HepG2 (cell line): ENCODE measurements at regions of chr20 and their contacts with region 1.

Region 1: DNA sequence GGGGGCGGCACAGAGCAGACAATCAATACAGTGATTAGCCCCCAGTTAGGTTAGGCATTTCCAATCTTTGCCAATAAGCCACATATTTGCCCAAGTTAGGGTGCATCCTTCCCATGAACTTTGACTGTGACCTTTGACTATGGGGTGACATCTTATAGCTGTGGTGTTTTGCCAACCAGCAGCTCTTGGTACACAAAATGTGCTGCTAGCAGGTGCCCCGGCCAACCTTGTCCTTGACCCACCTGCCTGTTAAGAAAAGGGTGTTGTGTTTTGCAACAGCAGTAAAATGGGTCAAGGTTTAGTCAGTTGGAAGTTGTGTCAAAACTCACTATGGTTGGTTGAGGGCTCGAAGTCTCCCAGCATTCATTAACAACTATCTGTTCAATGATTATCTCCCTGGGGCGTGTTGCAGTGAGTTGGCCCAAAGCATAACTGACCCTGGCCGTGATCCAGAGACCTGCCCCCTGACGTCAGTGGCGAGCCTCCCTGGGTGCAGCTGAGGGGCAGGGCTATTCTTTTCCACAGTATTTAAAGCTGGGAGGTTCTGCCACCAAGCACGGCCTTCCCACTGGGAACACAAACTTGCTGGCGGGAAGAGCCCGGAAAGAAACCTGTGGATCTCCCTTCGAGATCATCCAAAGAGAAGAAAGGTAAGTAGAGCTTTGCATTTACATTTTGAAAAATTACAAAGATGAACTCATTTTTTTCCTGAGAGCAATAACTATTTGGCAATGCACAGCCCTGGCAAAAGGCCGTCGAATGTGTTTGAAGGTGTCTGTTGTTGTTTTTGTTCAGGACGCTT is at the start of gene PCK1:
- DNase-seq: peak; percentile 89
- ATAC-seq: peak; percentile 89
- H3K4me3 ChIP-seq: peak within 1 kb of the TSS; percentile 47 to 68 (median 50)
- H3K27ac ChIP-seq: peak within 1 kb of the TSS; percentile 80
- H3K4me1 ChIP-seq: peaks cover 100% of the 10 kb centered on the region
- H3K27me3 ChIP-seq: peaks cover 7 to 10% of the 10 kb centered on the region in 2 experiments; a peak in 4 of 5 replicates
- CTCF ChIP-seq: no peak; the same call in 1 of the 2 replicates
- EP300 ChIP-seq: peak; percentile 95 to 98
- POLR2A ChIP-seq: peak; percentile 79 to 94; a peak in 3 of 4 replicates
- RAD21 ChIP-seq: no peak
- total RNA-seq, gene PCK1: 5.4 and 12.6 TPM in 2 replicates

Region 2: DNA sequence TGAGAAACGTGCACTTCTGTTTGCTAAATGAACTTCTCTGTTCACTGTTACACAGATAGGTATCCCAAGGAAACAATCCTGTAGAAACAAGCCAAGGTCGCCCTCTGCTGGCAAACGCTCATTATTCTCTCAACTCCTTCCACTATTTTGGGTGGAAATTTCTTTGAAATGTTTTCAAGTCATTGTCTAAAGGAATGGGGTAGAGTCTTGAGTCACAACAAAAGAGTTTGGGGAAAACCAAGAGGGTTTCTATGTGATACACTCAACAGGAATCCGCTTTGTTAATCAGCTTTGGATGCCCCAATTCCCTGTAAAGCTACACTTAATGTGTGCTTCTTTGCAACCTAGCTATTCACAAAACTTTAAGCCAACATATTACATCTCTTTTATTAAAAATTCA is 214.3 kb before region 1 on chr20:
- CTCF ChIA-PET with region 1: no interaction called
- POLR2A ChIA-PET with region 1: no interaction called
- in situ Hi-C with region 1: no loop called
- intact Hi-C with region 1: no loop called
- DNase-seq: peak; percentile 69
- ATAC-seq: peak; percentile 57
- H3K4me3 ChIP-seq: no peak overlapping the region
- H3K27ac ChIP-seq: no peak overlapping the region
- H3K4me1 ChIP-seq: no peaks in the 10 kb centered on the region
- H3K27me3 ChIP-seq: no peaks in the 10 kb centered on the region; a peak in 1 of 5 replicates
- CTCF ChIP-seq: peak; percentile 90
- EP300 ChIP-seq: no peak
- POLR2A ChIP-seq: no peak
- RAD21 ChIP-seq: peak; percentile 78

Region 3: GRCh38 chr20:57546956-57547649 is 13.7 kb before region 1 on chr20:
- CTCF ChIA-PET with region 1: no interaction called
- POLR2A ChIA-PET with region 1: interaction called, 12 read pairs
- in situ Hi-C with region 1: no loop called
- intact Hi-C with region 1: no loop called
- DNase-seq: peak; percentile 40
- ATAC-seq: peak; percentile 54
- H3K4me3 ChIP-seq: no peak overlapping the region; a peak in 1 of 6 replicates
- H3K27ac ChIP-seq: no peak overlapping the region
- H3K4me1 ChIP-seq: peaks cover 47% of the 10 kb centered on the region
- H3K27me3 ChIP-seq: peaks cover 6 to 32% of the 10 kb centered on the region in 2 experiments; a peak in 2 of 5 replicates
- CTCF ChIP-seq: no peak
- EP300 ChIP-seq: peak in 1 of 2 experiments; percentile 98; a peak in 2 of 4 replicates
- POLR2A ChIP-seq: 0 out of 4 replicates have a peak, but pooled peaks of 1 of the 2 experiments have one; percentile 21
- RAD21 ChIP-seq: no peak

Region 4: DNA sequence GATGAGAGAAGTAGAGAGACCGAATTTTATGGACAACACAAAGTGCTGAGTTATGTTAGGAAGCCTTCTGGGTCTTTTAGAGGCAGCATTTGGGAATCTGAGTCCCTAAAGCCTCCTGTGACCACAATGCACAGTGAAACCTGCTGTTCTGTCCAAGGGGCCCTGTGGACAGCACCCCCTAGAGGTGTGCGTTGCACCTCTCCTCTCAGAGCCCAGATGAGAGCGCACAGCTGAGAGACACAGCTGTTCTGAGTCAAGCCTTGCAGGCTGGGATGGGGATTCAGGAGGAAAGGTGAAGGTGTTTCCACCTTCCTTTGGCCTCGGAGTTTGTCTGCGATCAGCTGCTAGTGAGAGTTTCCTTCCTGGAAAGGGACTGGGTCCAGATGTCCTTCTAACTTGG is 13.1 kb after region 1 on chr20:
- CTCF ChIA-PET with region 1: no interaction called
- POLR2A ChIA-PET with region 1: interaction called, 96 read pairs
- in situ Hi-C with region 1: no loop called
- intact Hi-C with region 1: no loop called
- DNase-seq: no peak
- ATAC-seq: peak; percentile 41
- H3K4me3 ChIP-seq: no peak overlapping the region
- H3K27ac ChIP-seq: no peak overlapping the region
- H3K4me1 ChIP-seq: peaks cover 62% of the 10 kb centered on the region
- H3K27me3 ChIP-seq: peaks cover 1 to 10% of the 10 kb centered on the region in 2 experiments; a peak in 3 of 5 replicates
- CTCF ChIP-seq: peak; percentile 71
- EP300 ChIP-seq: no peak
- POLR2A ChIP-seq: no peak
- RAD21 ChIP-seq: no peak

Region 5: GRCh38 chr20:57589728-57590484 is 29.2 kb after region 1 on chr20:
- CTCF ChIA-PET with region 1: no interaction called
- POLR2A ChIA-PET with region 1: interaction called, 57 read pairs
- in situ Hi-C with region 1: no loop called
- intact Hi-C with region 1: loop called (anchors 5 kb)
- DNase-seq: peak; percentile 70
- ATAC-seq: peak; percentile 67
- H3K4me3 ChIP-seq: peak overlapping the region in 1 of 3 experiments; percentile 26; a peak in 2 of 6 replicates
- H3K27ac ChIP-seq: peak overlapping the region; percentile 68
- H3K4me1 ChIP-seq: peaks cover 98% of the 10 kb centered on the region
- H3K27me3 ChIP-seq: no peaks in the 10 kb centered on the region
- CTCF ChIP-seq: 0 out of 2 replicates have a peak, but pooled peaks have one; percentile 14
- EP300 ChIP-seq: peak in 1 of 2 experiments; percentile 81; a peak in 1 of 4 replicates
- POLR2A ChIP-seq: peak in 1 of 2 experiments; percentile 59; a peak in 2 of 4 replicates
- RAD21 ChIP-seq: no peak; the same call in 1 of the 2 replicates

Region 6: GRCh38 chr20:57596998-57597939 is 36.5 kb after region 1 on chr20:
- CTCF ChIA-PET with region 1: no interaction called
- POLR2A ChIA-PET with region 1: interaction called, 16 read pairs
- in situ Hi-C with region 1: no loop called
- intact Hi-C with region 1: loop called (anchors 5 kb)
- DNase-seq: peak; percentile 43
- ATAC-seq: peak; percentile 75
- H3K4me3 ChIP-seq: peak overlapping the region in 1 of 3 experiments; percentile 27; a peak in 1 of 6 replicates
- H3K27ac ChIP-seq: no peak overlapping the region
- H3K4me1 ChIP-seq: peaks cover 25% of the 10 kb centered on the region
- H3K27me3 ChIP-seq: peaks cover 0 to 36% of the 10 kb centered on the region in 2 experiments; a peak in 4 of 5 replicates
- CTCF ChIP-seq: peak; percentile 98
- EP300 ChIP-seq: 0 out of 4 replicates have a peak, but pooled peaks of 1 of the 2 experiments have one; percentile 16
- POLR2A ChIP-seq: no peak
- RAD21 ChIP-seq: peak; percentile 97

Region 7: GRCh38 chr20:57680131-57680716 is 119.5 kb after region 1 on chr20:
- CTCF ChIA-PET with region 1: no interaction called
- POLR2A ChIA-PET with region 1: no interaction called
- in situ Hi-C with region 1: no loop called
- intact Hi-C with region 1: no loop called
- DNase-seq: no peak
- ATAC-seq: no peak
- H3K4me3 ChIP-seq: no peak overlapping the region
- H3K27ac ChIP-seq: no peak overlapping the region
- H3K4me1 ChIP-seq: no peaks in the 10 kb centered on the region
- H3K27me3 ChIP-seq: peaks cover 12 to 100% of the 10 kb centered on the region in 2 experiments
- CTCF ChIP-seq: no peak
- EP300 ChIP-seq: no peak
- POLR2A ChIP-seq: no peak
- RAD21 ChIP-seq: no peak